PC-9 (cell line): ENCODE measurements at regions of chr12 and their contacts with region 1.

Region 1: DNA sequence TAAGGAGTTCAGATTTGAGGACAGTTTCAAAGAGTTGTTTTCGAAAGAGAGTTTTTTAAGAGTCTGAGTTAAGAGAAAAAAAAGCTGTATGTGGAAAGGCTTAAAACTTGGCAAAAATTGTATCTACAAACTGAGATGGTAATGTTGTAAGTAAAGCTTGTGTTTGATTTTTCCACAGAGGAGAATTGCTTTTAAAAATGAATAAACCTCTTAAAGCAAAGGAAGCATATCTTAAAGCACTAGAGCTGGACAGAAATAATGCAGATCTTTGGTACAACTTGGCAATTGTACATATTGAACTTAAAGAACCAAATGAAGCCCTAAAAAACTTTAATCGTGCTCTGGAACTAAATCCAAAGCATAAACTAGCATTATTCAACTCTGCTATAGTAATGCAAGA is 50.3 kb downstream of the TMTC3 start:
- DNase-seq: no peak
- H3K4me3 ChIP-seq: no peak overlapping the region
- H3K27ac ChIP-seq: no peak overlapping the region
- H3K4me1 ChIP-seq: no peaks in the 10 kb centered on the region
- H3K27me3 ChIP-seq: no peaks in the 10 kb centered on the region
- CTCF ChIP-seq: no peak

Region 2: DNA sequence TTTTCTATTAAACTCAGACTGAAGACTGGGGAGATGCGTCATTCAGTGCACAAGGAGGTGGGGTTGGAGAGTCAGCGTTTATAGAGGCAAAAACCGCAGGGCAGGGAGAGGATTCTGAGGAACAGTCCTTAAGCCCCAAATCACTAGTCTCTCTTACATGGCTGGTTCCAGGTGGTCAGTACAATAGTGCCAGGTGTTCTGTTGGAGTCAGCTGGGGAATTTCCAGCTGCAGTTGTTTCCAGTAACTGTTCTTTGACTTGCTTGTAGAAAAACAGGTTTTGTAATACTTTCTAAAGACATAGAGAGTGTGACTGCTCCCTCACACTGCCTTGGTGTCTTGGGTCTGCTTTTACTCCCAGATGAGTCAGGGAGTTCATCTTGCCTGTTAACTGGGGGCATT is 141.8 kb after region 1 on chr12:
- CTCF ChIA-PET with region 1: interaction called, 15 read pairs
- POLR2A ChIA-PET with region 1: no interaction called
- intact Hi-C with region 1: no loop called
- DNase-seq: peak; percentile 36 to 56
- H3K4me3 ChIP-seq: no peak overlapping the region
- H3K27ac ChIP-seq: no peak overlapping the region
- H3K4me1 ChIP-seq: peaks cover 11% of the 10 kb centered on the region; the same call in 1 of the 2 replicates
- H3K27me3 ChIP-seq: no peaks in the 10 kb centered on the region
- CTCF ChIP-seq: no peak